Left ventricle myocardium inferior (tissue), 1 donor: ENCODE measurements at regions of chr2 and their contacts with region 1.

Region 1: DNA sequence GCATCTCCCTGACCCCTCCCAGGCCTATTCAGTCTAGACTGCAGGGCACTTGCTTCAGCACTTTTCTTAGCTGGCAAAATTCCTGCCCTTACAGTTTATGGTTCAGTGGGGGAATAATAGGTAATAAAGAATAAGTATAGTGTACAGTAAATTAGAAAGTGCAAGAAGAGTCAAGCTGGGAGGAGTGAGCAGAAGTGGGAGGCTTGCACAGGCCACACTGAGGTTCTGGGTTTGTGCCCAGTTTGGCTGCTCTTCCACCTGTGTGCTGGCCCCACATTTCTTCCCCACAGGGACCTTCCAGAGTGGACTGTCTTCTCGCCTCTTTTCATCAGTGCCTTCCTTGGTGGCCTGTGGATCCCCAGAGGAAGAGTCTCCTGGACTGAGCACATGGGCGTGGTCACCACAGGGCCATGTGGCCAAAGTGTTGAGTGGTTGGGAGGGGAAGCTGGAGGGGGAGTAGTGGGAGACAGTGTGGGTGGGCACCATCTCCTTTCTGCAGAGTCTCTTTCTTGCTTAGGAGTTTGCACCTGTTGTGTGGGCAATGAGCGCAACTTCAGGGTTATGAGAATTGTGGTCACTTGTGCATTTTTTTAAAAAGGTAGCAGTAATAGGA is 128.6 kb upstream of the ZSWIM2 start:
- DNase-seq: no peak
- H3K4me3 ChIP-seq: no peak overlapping the region
- H3K27ac ChIP-seq: no peak overlapping the region
- H3K4me1 ChIP-seq: no peaks in the 10 kb centered on the region
- H3K27me3 ChIP-seq: no peaks in the 10 kb centered on the region
- CTCF ChIP-seq: no peak

Region 2: GRCh38 chr2:185147361-185147760 is 1830.2 kb before region 1 on chr2:
- intact Hi-C with region 1: no loop called
- DNase-seq: no peak
- H3K4me3 ChIP-seq: no peak overlapping the region
- H3K27ac ChIP-seq: no peak overlapping the region
- H3K4me1 ChIP-seq: no peaks in the 10 kb centered on the region
- H3K27me3 ChIP-seq: no peaks in the 10 kb centered on the region
- CTCF ChIP-seq: no peak

Region 3: DNA sequence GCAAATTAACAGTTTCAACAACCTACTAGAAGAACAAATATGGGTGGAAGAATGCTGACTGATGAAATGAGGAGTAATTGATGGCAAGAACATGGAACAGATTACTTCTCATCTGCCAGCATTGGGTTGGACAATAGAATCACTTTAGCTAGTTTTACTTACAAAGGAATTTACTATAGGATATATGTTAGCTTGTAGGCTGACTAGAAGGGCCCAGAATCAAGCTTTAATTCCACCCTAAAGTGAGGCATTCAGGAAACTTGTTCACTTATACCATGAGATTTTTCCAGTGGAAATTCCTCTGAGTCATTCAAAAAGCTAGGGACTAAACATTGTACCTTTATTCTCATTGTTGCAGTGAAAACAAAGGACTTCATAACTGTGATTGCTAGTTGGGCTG is 123.6 kb before region 1 on chr2:
- intact Hi-C with region 1: loop called (anchors 10 kb)
- DNase-seq: no peak
- H3K4me3 ChIP-seq: no peak overlapping the region
- H3K27ac ChIP-seq: no peak overlapping the region
- H3K4me1 ChIP-seq: peaks cover 3% of the 10 kb centered on the region
- H3K27me3 ChIP-seq: peaks cover 5% of the 10 kb centered on the region
- CTCF ChIP-seq: no peak

Region 4: GRCh38 chr2:187093771-187094412 is 116.4 kb after region 1 on chr2:
- intact Hi-C with region 1: no loop called
- DNase-seq: no peak
- H3K4me3 ChIP-seq: no peak overlapping the region
- H3K27ac ChIP-seq: no peak overlapping the region
- H3K4me1 ChIP-seq: no peaks in the 10 kb centered on the region
- H3K27me3 ChIP-seq: no peaks in the 10 kb centered on the region
- CTCF ChIP-seq: no peak